Adrenal gland (tissue), 19 donors: ENCODE measurements at regions of chr2 and their contacts with region 1.

Region 1: GRCh38 chr2:54194761-54195750 is 61.0 kb downstream of the TSPYL6 start:
- DNase-seq: no peak
- H3K4me3 ChIP-seq: no peak overlapping the region
- H3K27ac ChIP-seq: no peak overlapping the region
- H3K4me1 ChIP-seq: no peaks in the 10 kb centered on the region
- H3K27me3 ChIP-seq: no peaks in the 10 kb centered on the region
- CTCF ChIP-seq: no peak
- POLR2A ChIP-seq: no peak

Region 2: DNA sequence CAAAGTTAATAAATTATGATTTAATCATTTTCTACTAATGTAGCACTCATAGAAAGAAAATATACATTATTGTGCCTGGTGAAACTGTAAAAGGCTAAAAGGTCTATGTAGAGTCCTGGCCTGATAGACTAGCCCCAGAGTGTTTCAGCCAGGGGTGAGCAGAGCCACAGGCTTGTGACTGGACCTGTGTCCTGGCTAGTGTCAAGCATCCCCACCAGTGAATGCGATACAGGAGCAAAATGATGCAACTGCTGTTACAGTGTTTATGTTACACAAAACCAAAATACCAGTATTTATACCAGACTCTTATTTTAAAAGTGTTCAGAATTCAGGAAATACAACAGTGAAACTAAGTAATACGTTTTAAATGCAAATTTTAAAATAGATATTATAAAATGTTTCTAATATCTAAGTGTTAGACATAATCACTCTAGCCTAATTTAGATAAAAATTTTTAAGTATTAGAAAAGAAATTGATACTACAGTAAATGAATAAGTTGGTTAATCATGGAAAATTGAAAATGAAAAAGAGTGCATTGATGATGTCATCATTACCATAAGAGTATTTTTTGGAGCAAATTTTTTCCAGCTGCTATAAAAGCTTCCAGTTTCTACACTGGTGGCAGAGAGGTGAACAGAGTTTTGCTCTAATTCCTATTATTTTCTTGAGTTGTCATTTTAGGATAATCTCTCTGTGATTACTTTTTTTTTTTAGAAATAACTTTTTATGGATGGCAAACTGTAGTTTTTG is 67.1 kb after region 1 on chr2:
- intact Hi-C with region 1: no loop called
- DNase-seq: no peak
- H3K4me3 ChIP-seq: no peak overlapping the region
- H3K27ac ChIP-seq: no peak overlapping the region
- H3K4me1 ChIP-seq: no peaks in the 10 kb centered on the region
- H3K27me3 ChIP-seq: no peaks in the 10 kb centered on the region
- CTCF ChIP-seq: no peak
- POLR2A ChIP-seq: no peak

Region 3: GRCh38 chr2:54503192-54503591 is 308.1 kb after region 1 on chr2:
- intact Hi-C with region 1: loop called in 1 of 2 experiments (anchors 10 kb)
- DNase-seq: peak in 1 of 7 donors; percentile 31
- H3K4me3 ChIP-seq: no peak overlapping the region
- H3K27ac ChIP-seq: peak overlapping the region in 1 of 5 donors; percentile 25
- H3K4me1 ChIP-seq: peaks cover 0 to 43% of the 10 kb centered on the region in 2 donors
- H3K27me3 ChIP-seq: no peaks in the 10 kb centered on the region
- CTCF ChIP-seq: peak; percentile 12 to 49 (median 44)
- POLR2A ChIP-seq: no peak